ENCODE measurements at regions of chr12 and their contacts with region 1.

Region 1: DNA sequence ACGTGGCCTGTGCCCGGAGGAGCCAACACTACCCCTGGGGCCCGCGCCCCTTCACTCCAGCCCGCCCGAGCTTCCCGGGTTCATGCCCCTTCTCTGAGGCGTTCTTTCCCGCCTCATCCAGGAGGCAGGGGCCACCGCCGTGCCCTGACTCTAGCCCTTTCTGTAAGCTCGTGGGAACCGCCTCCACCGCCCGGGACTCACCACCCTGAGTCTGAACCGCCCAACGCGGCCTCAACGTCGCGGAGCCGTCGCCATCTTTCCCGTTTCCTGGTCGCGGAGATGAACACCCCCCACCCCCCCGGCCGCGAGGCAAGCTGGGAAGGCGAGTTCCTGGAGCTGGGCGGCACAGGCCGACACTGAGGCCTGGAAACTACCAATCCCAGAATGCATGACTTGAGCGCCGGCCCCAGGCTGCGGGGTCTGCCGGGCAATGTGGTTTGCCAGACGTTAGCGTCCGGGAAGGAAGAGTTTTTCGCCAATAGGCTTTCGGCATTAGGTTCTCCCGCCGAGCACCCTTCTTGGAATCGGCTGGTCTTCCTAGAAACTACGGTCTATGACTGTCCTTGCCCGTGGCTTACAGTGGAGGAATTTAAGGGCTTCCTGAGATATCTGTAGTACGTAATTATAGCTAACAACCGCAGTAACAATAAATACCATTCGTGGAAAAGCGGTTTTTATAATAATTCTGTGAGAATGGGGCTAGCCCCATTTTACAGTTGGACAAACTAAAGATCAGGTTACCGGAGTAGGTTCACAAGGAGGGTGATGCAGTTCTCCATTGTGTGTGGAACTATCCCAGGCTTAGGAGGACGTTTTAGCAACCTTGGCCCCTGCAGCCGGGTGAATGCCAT is at the start of gene DDX23:
- DNase-seq: peak; percentile 97
- H3K4me3 ChIP-seq: peak within 1 kb of the TSS; percentile 75
- H3K4me3 Mint-ChIP-seq: peak within 1 kb of the TSS; percentile 99
- H3K27ac Mint-ChIP-seq: peak within 1 kb of the TSS; percentile 99
- H3K4me1 ChIP-seq: peaks cover 8% of the 10 kb centered on the region
- H3K4me1 Mint-ChIP-seq: peaks cover 25% of the 10 kb centered on the region
- H3K27me3 ChIP-seq: no peaks in the 10 kb centered on the region
- H3K27me3 Mint-ChIP-seq: no peaks in the 10 kb centered on the region
- CTCF ChIP-seq: no peak
- total RNA-seq, gene DDX23: 151 and 152 TPM in 2 replicates

Region 2: DNA sequence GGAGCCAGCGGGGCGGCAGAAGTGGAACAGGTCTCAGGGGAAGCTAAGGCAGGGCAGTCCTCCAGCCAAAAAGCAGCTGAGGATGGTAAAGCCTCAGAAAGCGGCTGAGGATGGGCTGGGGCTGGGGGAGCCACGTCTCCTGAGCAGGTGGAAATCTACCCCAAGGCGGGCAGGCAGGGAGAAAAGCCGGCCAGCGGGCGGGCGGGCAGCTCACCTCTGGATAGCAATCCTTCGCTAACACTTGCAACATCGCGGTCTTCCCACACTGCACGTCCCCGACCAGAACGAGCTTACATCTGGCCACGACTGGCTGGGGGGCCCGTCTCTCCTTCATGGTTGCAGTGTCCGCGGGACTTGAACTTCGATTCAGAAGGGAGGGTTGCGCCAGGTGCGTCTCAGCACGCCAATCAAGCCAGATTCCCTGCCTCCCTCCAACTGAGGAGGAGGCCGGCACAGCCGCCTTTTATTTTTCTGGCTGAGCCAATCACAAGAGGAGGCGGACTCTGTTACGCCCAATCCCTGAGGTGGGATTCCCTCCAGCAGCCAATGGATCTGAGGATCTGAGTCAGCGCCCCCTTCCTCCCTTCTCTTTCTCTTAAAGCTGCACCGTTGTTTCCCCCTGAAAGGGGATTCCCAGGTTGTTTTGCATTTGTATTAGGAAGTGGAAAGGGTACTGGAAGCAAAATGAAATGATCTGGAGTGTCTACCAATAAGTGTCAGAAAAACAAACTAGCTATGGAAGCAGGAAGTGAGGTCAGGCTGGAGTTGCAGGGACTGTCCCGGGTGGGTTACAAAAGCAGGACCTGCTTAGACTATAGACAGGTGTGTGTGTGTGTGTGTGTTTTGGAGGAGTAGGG is 13.6 kb after region 1 on chr12 and contains the start of gene RND1:
- CTCF ChIA-PET with region 1: interaction called, 30 read pairs
- POLR2A ChIA-PET with region 1: interaction called, 17 read pairs
- intact Hi-C with region 1: no loop called
- DNase-seq: peak; percentile 92 to 93
- H3K4me3 ChIP-seq: peak within 1 kb of the TSS; percentile 73
- H3K4me3 Mint-ChIP-seq: peak within 1 kb of the TSS; percentile 89
- H3K27ac Mint-ChIP-seq: peak within 1 kb of the TSS; percentile 80
- H3K4me1 ChIP-seq: peaks cover 22% of the 10 kb centered on the region
- H3K4me1 Mint-ChIP-seq: peaks cover 14% of the 10 kb centered on the region
- H3K27me3 ChIP-seq: no peaks in the 10 kb centered on the region
- H3K27me3 Mint-ChIP-seq: no peaks in the 10 kb centered on the region
- CTCF ChIP-seq: peak in 1 of 2 experiments; percentile 13
- total RNA-seq, gene RND1: 5.1 and 5.2 TPM in 2 replicates

Region 3: DNA sequence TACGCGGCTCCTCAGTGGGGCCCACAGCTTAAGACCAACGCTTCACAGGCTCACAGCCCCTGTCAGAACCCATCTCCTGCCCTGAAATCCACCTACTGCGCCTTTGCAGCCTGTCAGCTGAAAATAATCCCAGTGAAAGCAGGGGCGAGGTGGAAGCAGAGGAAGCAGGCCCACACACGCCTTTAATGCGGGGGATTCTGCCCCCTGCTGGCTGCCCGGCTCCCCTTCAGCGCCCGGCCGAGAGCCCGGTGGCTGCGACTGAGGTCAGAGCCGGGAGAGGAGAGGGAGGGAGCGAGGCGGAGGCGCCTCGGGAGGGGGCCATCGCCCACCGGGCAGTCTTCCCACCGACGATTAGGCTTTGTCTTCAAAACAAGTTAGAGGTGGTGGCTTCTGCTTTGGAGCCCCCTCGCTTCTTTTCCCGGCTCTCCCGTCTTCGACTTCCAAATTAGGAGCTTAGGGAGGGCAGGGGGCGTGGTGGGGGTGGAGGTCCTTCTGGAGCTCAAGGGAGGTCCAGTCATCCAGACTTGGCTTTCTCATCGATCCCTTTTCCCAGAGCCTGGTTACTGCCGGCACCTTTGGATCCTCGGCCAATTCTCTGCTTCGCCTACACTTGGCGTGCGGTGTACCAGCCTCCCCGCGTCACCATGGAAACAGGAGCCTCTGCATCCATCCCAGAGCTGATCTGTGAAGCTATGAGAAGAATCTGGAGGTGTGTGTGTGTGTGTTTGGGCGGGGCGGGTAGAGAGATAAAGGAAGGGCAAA is 38.7 kb after region 1 on chr12:
- CTCF ChIA-PET with region 1: interaction called, 321 read pairs
- POLR2A ChIA-PET with region 1: interaction called, 75 read pairs
- intact Hi-C with region 1: loop called (anchors 1 kb)
- DNase-seq: peak; percentile 97 to 99
- H3K4me3 ChIP-seq: peak overlapping the region; percentile 50
- H3K4me3 Mint-ChIP-seq: peak overlapping the region; percentile 63
- H3K27ac Mint-ChIP-seq: peak overlapping the region; percentile 66
- H3K4me1 ChIP-seq: peaks cover 33% of the 10 kb centered on the region
- H3K4me1 Mint-ChIP-seq: peaks cover 36% of the 10 kb centered on the region
- H3K27me3 ChIP-seq: no peaks in the 10 kb centered on the region
- H3K27me3 Mint-ChIP-seq: no peaks in the 10 kb centered on the region
- CTCF ChIP-seq: peak; percentile 98 to 99

Region 4: GRCh38 chr12:48957141-48958048 is 105.3 kb after region 1 on chr12 and contains the start of gene ARF3:
- CTCF ChIA-PET with region 1: interaction called, 12 read pairs
- POLR2A ChIA-PET with region 1: interaction called, 7 read pairs
- intact Hi-C with region 1: no loop called
- DNase-seq: peak; percentile 97 to 98
- H3K4me3 ChIP-seq: peak within 1 kb of the TSS; percentile 79
- H3K4me3 Mint-ChIP-seq: peak within 1 kb of the TSS; percentile 89
- H3K27ac Mint-ChIP-seq: peak within 1 kb of the TSS; percentile 87
- H3K4me1 ChIP-seq: peaks cover 8% of the 10 kb centered on the region; the same call in 1 of the 2 replicates
- H3K4me1 Mint-ChIP-seq: peaks cover 13% of the 10 kb centered on the region
- H3K27me3 ChIP-seq: no peaks in the 10 kb centered on the region
- H3K27me3 Mint-ChIP-seq: no peaks in the 10 kb centered on the region
- CTCF ChIP-seq: no peak
- total RNA-seq, gene ARF3: 249 and 257 TPM in 2 replicates

Region 5: DNA sequence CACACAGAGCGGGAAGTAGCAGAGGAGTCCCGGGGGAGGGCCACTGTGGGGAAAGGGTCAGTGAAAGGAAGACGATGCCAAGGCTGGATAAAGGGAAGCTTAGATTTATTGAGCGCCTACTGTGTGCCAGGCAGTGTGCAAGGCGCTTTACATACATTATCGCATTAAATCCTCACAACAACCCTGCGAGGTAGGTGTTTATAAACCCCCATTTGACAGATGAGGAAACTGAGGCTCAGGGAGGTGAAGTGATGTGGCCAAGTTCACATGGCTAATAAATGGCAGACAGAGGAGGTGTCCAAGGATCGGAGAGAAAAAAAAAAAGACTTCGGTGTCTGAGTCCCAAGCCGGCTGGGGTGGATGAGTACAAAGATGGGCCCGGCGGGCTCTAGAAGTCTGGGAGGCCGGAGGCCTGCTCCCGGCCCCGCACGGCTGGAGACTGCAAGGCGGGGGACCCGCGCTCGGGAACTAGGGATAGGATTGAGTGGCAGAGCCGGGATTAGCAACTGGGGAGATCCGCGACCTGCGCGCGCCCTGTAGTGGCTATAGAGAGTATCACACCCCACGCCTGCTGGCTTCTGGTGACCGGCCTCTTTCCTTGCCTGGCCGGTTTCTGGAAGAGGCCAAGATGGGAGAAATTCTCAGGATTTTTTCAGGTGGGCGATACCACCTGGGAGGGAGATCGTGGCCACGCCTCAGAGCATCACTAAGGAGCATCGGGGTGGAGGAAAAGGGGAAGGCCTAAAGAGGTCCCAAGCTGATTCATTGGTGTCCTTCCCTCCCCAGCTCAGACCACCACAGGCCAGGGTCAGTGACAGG is 143.2 kb after region 1 on chr12:
- CTCF ChIA-PET with region 1: interaction called, 3 read pairs
- POLR2A ChIA-PET with region 1: interaction called, 7 read pairs
- intact Hi-C with region 1: loop called (anchors 1 kb)
- DNase-seq: peak; percentile 93 to 96
- H3K4me3 ChIP-seq: no peak overlapping the region
- H3K4me3 Mint-ChIP-seq: peak overlapping the region; percentile 59
- H3K27ac Mint-ChIP-seq: peak overlapping the region; percentile 5
- H3K4me1 ChIP-seq: peaks cover 28% of the 10 kb centered on the region
- H3K4me1 Mint-ChIP-seq: peaks cover 28% of the 10 kb centered on the region
- H3K27me3 ChIP-seq: no peaks in the 10 kb centered on the region
- H3K27me3 Mint-ChIP-seq: no peaks in the 10 kb centered on the region
- CTCF ChIP-seq: peak; percentile 93 to 95